ENCODE measurements at regions of chr19 and their contacts with region 1.

Region 1: GRCh38 chr19:18192673-18193387 is at the start of gene MPV17L2:
- DNase-seq: peak; percentile 99 to 100 (median 100)
- H3K4me3 ChIP-seq: peak within 1 kb of the TSS; percentile 62 to 88 (median 64)
- H3K4me3 Mint-ChIP-seq: peak within 1 kb of the TSS; percentile 80 to 93
- H3K27ac ChIP-seq: peak within 1 kb of the TSS; percentile 81 to 90
- H3K27ac Mint-ChIP-seq: peak within 1 kb of the TSS; percentile 92 to 96 (median 96)
- H3K4me1 ChIP-seq: peaks cover 29 to 37% of the 10 kb centered on the region in 2 donors
- H3K4me1 Mint-ChIP-seq: peaks cover 28% of the 10 kb centered on the region
- H3K27me3 ChIP-seq: no peaks in the 10 kb centered on the region
- H3K27me3 Mint-ChIP-seq: peaks cover 0 to 4% (median 0%) of the 10 kb centered on the region in 3 donors
- CTCF ChIP-seq: no peak
- polyA plus RNA-seq, gene MPV17L2: 14.3 to 20.2 (median 15.0) TPM

Region 2: GRCh38 chr19:18152444-18152816 is 40.4 kb before region 1 on chr19:
- intact Hi-C with region 1: loop called in 1 of 2 experiments (anchors 5 kb)
- DNase-seq: peak; percentile 99 to 100 (median 100)
- H3K4me3 ChIP-seq: peak overlapping the region; percentile 65 to 92 (median 89)
- H3K4me3 Mint-ChIP-seq: peak overlapping the region; percentile 87 to 93
- H3K27ac ChIP-seq: peak overlapping the region; percentile 94 to 100
- H3K27ac Mint-ChIP-seq: peak overlapping the region; percentile 95 to 99 (median 97)
- H3K4me1 ChIP-seq: peaks cover 30 to 42% of the 10 kb centered on the region in 2 donors
- H3K4me1 Mint-ChIP-seq: peaks cover 36% of the 10 kb centered on the region
- H3K27me3 ChIP-seq: no peaks in the 10 kb centered on the region
- H3K27me3 Mint-ChIP-seq: peaks cover 0 to 2% (median 1%) of the 10 kb centered on the region in 3 donors
- CTCF ChIP-seq: peak; percentile 93